ENCODE measurements at regions of chr3 and their contacts with region 1.

Region 1: GRCh38 chr3:39383045-39383880 is at the start of gene SLC25A38:
- DNase-seq: peak; percentile 84
- ATAC-seq: peak; percentile 81
- H3K4me3 ChIP-seq: peak within 1 kb of the TSS; percentile 73
- H3K27ac ChIP-seq: peak within 1 kb of the TSS; percentile 66
- H3K4me1 ChIP-seq: peaks cover 23% of the 10 kb centered on the region
- H3K27me3 ChIP-seq: no peaks in the 10 kb centered on the region
- CTCF ChIP-seq: peak; percentile 28; the same call in 1 of the 2 replicates
- total RNA-seq, gene SLC25A38: 29.7 and 32.0 TPM in 2 replicates

Region 2: DNA sequence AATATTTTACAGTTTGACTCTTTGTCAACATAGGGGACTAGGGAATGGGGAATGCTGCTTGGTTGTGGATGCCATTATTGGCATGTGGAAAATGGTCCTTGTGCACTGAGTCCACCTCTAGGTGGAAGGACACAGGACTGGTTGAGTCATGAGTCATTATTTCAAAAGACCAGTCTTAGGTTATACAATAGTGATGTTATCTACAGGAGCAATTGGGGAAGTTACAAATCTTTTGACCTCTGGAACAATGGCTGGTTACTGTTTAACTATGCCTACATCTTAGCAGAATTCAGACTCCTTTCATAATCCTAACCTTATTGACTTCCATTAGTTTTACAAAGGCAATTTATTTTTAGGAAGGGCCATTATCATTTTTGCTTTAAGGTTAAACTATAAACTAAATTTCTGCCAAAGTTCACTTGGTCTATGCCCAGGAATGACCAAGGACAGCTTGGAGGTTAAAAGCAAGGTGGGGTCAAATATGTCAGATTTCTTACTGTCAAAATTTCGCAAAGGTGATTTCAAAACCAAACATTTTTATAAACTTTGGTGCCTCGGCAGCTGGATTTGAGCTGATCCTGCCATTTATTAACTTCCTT is 65.6 kb before region 1 on chr3:
- CTCF ChIA-PET with region 1: no interaction called
- POLR2A ChIA-PET with region 1: no interaction called
- intact Hi-C with region 1: no loop called
- DNase-seq: peak; percentile 32
- ATAC-seq: no peak; the same call in 1 of the 2 replicates
- H3K4me3 ChIP-seq: no peak overlapping the region
- H3K27ac ChIP-seq: no peak overlapping the region
- H3K4me1 ChIP-seq: no peaks in the 10 kb centered on the region
- H3K27me3 ChIP-seq: peaks cover 7% of the 10 kb centered on the region
- CTCF ChIP-seq: no peak

Region 3: DNA sequence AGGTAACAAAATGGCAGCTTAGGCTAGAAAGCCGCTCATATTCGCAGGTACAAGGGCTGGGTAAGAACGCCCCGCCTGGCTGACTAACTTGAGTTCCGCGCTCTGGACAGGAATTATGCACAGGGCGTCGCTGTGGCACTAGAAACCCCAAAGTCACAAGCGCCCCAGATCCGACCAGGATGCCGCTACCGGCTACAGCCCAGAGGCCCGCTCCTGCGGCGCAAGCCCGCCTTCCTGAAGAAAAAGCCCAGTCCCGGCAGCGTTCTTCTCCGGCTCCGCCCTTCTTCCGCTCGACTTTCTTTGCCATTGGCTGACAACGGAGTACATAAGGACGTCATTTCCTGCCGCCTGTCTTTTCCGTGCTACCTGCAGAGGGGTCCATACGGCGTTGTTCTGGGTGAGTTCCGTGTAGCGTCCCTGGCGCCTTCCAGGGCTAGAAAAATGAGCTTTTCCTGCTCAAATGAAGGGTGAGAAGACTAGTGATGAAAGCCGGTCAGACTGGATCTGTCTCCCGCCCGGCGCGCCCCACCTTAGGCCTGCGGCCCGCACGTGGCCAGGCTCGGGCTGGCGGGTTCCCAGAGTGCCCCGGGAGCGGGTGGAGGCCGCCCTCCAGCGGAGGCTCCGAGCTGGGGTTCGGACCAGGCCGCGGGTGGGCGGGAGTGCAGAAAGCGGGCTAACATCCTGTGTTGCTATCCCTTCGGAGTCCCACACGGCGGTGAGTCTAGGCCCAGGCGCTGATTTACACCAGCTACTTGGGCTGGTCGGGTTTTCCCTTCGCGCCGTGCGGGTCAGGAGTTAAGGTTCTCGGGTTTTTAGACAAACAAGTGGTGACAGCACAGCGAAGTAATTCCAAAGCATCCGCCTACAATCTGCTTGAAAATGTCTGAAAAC is 23.4 kb after region 1 on chr3 and contains the start of gene RPSA:
- CTCF ChIA-PET with region 1: no interaction called
- POLR2A ChIA-PET with region 1: no interaction called
- intact Hi-C with region 1: loop called (anchors 1 kb)
- DNase-seq: peak; percentile 98
- ATAC-seq: peak; percentile 97
- H3K4me3 ChIP-seq: peak within 1 kb of the TSS; percentile 85
- H3K27ac ChIP-seq: peak within 1 kb of the TSS; percentile 69
- H3K4me1 ChIP-seq: peaks cover 26% of the 10 kb centered on the region
- H3K27me3 ChIP-seq: no peaks in the 10 kb centered on the region
- CTCF ChIP-seq: peak; percentile 27; the same call in 1 of the 2 replicates
- total RNA-seq, gene RPSA: 2,286 and 2,722 TPM in 2 replicates

Region 4: DNA sequence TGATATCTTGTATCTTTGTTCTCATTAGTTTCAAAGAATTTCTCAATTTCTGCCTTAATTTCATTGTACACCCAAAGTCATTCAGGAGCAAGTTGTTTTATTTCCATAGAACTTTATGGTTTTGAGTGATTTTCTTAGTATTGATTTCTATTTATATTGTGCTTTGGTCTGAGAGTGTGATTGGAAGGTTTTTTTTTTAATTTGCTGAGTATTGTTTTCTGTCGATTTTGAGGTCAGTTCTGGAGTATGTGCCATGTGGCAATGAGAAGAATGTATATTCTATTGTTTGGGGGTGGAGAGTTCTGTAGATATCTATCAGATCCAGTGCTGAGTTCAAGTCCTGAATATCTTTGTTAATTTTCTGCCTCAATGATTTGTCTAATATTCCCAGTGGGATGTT is 222.6 kb after region 1 on chr3:
- CTCF ChIA-PET with region 1: no interaction called
- POLR2A ChIA-PET with region 1: no interaction called
- intact Hi-C with region 1: no loop called
- DNase-seq: no peak
- ATAC-seq: no peak
- H3K4me3 ChIP-seq: no peak overlapping the region
- H3K27ac ChIP-seq: no peak overlapping the region
- H3K4me1 ChIP-seq: no peaks in the 10 kb centered on the region
- H3K27me3 ChIP-seq: peaks cover 7% of the 10 kb centered on the region; the same call in 1 of the 2 replicates
- CTCF ChIP-seq: no peak

Measured in PC-3 (cell line).